ENCODE measurements at regions of chr6 and their contacts with region 1.

Region 1: GRCh38 chr6:144119376-144119775 is 24.0 kb upstream of the SF3B5 start:
- DNase-seq: no peak
- ATAC-seq: no peak
- H3K4me3 ChIP-seq: no peak overlapping the region
- H3K27ac ChIP-seq: no peak overlapping the region
- H3K4me1 ChIP-seq: no peaks in the 10 kb centered on the region
- H3K27me3 ChIP-seq: no peaks in the 10 kb centered on the region
- CTCF ChIP-seq: no peak
- POLR2A ChIP-seq: no peak

Region 2: DNA sequence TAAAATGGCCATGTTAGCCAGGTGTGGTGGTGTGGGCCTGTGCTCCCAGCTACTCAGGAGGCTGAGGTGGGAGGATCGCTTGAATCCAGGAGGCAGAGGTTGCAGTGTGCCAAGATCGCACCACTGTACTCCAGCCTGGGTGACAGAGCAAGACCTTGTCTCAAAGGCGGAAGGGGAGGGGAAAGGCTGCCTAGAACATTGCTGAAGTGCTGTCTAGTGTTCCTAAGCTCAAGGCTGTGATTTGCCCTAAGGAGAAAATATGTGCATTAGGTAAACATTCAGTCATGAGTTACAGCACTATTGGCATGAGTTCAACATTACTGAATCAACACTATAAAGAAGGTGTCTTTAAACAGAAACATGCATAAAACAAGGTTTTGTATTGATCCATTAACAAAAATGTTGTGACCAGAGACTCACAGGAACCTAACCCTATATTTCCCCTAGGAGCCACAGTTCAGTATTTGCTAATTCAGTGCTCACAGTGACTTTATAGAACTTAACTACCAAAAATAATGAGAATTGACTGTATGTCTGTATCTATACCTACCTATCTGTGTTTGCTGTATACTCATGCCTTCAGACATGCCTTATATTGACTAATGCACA is 241.0 kb before region 1 on chr6:
- intact Hi-C with region 1: no loop called
- DNase-seq: no peak
- ATAC-seq: no peak
- H3K4me3 ChIP-seq: no peak overlapping the region
- H3K27ac ChIP-seq: no peak overlapping the region
- H3K4me1 ChIP-seq: no peaks in the 10 kb centered on the region
- H3K27me3 ChIP-seq: no peaks in the 10 kb centered on the region
- CTCF ChIP-seq: no peak
- POLR2A ChIP-seq: no peak

Region 3: DNA sequence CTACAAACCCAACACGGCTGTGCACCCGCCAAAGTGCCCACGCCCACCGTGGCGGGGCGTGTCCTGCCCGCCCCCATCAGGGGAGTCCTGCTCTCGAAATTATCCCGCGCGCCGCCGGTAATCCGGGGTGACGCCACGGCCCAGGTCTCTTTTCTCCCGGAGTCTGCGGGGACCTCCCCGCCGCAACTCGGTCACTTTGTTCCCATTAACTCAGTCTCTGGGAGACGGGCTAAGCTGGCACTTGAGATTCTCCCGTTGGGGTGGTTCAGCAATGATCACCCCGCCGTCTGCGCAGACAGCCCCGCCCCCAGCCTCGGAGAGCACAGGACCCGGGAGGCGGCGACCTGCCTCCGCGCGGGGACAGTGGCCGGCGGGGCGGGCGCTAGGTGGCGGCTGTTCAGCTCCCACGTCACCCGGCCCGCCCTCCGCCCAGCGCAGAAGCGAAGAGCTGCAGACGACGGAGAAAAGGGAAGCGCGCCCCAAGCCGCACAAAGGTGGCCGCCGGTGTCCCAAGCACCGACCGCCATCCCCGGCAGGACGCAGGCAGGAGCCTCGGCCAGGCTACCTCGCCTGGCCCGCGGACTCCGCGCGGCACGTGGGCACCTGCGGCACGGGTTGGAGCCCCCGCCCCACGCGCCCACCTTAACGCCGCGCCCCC is 55.5 kb before region 1 on chr6:
- intact Hi-C with region 1: no loop called
- DNase-seq: peak; percentile 91 to 95 (median 92)
- ATAC-seq: peak; percentile 97
- H3K4me3 ChIP-seq: peak overlapping the region; percentile 64 to 68
- H3K27ac ChIP-seq: peak overlapping the region; percentile 60 to 91 (median 86)
- H3K4me1 ChIP-seq: peaks cover 16% of the 10 kb centered on the region
- H3K27me3 ChIP-seq: no peaks in the 10 kb centered on the region
- CTCF ChIP-seq: peak in 6 of 7 experiments; percentile 20 to 56 (median 36)
- POLR2A ChIP-seq: peak; percentile 93 to 95 (median 93)

Region 4: DNA sequence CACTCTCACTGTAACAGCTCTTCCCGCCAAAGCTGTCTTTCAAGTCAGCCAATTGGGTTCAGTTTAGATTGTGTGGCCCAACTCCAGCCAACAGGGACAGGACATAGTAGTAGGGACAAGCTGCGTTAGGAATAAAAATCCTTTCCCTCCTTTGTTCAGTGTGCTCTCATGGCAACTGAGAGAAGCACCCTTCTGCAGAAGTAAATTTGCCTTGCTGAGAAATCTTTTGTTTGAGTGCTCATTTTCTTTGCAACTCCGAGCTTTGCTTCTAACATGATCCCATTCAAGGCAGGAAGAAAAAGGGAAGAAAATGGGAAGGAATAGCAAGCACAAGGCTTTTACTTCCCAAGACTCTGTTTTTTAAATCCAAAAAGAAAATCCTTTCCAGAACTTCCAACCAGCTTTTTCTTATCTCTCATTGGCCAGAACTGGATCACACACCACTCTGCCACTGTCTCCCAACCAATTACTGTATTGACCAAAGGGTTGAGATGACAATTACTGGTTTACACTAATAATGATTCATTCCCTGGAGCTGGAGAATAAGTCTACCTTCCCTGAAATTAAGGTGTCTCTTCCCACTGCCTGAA is 83.6 kb after region 1 on chr6:
- intact Hi-C with region 1: loop called (anchors 10 kb)
- DNase-seq: no peak
- ATAC-seq: no peak
- H3K4me3 ChIP-seq: no peak overlapping the region
- H3K27ac ChIP-seq: no peak overlapping the region
- H3K4me1 ChIP-seq: no peaks in the 10 kb centered on the region
- H3K27me3 ChIP-seq: no peaks in the 10 kb centered on the region
- CTCF ChIP-seq: no peak
- POLR2A ChIP-seq: no peak

Measured in body of pancreas (tissue), 4 donors.